Panc1 (cell line): ENCODE measurements at regions of chr16 and their contacts with region 1.

Region 1: DNA sequence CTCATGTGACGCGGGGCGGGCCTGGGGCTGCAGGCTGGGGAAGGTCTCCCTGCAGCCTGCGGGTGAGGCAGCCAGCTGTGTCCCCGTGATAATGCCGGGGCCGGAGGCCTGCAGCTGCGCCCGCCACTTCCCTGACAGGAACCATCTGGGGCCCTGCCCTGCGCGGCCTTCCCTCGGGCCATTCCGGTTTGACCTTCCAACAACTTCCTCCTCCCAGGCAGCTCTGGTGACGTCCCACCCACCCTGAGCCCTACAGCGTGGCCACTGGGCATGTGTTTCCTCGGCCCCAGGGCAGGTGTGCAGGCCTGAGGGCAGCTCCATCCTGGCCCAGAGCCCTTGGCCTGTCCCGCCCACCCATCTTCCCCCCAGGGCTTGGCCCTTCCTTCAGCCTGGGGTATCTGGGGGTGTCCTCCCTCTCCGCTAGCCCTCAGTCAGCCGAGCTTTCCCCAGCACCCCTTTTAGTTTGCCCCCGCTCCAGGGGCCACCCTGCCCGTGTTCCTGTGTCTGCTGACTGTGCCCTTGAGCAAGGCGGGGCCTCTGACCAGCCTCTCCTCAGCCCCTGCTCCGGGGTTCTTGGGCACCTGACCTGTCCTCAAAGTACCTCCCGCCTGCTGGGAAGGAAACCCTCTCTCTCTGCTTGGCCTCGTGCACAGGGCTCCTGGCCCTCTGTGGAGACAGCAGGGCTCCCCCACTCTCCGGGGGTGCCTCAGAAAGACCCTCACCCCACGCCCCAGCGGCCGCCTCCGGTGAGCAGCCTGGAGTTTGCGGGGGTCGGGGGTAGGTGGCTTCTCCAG is at the start of gene CBFA2T3:
- DNase-seq: no peak
- ATAC-seq: no peak
- H3K4me3 ChIP-seq: no peak within 1 kb of the TSS
- H3K27ac ChIP-seq: no peak within 1 kb of the TSS
- H3K4me1 ChIP-seq: no peaks in the 10 kb centered on the region
- H3K27me3 ChIP-seq: no peaks in the 10 kb centered on the region
- CTCF ChIP-seq: no peak
- total RNA-seq, gene CBFA2T3: 13.7 TPM

Region 2: GRCh38 chr16:88831838-88832237 is 145.4 kb before region 1 on chr16:
- CTCF ChIA-PET with region 1: no interaction called
- POLR2A ChIA-PET with region 1: no interaction called
- in situ Hi-C with region 1: no loop called
- intact Hi-C with region 1: no loop called
- DNase-seq: no peak
- ATAC-seq: peak; percentile 61; the same call in 1 of the 2 replicates
- H3K4me3 ChIP-seq: no peak overlapping the region
- H3K27ac ChIP-seq: no peak overlapping the region
- H3K4me1 ChIP-seq: no peaks in the 10 kb centered on the region
- H3K27me3 ChIP-seq: no peaks in the 10 kb centered on the region
- CTCF ChIP-seq: no peak

Region 3: DNA sequence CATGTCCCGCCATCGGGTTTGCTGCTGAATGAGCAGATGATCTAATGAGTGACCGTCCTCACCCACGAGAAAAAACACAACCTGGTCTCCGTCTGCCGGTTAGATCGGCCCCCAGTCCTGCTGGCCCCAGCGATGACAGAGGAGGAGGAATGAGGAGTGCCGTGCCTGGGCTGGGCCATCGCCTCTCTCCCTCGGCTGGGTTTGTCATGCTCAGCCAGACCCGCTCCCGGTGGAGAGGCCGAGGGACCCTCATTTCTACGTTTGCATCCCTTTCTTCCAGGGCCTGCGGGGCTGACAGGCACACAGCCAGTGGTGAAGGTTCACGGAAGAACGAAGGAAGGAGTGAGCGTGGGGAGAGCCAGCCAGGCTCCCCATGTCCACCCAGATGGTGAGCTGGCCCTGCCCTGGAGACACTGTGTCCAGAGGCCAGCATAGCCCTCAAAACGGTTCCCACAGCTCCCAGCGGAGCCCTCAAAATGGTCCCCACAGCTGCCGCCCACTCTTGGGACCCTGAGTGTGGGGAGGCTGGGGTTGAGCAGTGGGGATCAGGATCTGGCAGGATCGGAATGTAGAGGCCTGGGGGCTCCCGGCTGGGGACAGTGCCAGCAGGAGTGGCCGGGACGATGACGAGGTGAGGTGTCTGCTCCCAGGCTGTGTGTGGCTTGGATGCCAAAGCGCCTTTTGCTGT is 24.1 kb before region 1 on chr16:
- CTCF ChIA-PET with region 1: no interaction called
- POLR2A ChIA-PET with region 1: interaction called, 11 read pairs
- in situ Hi-C with region 1: no loop called
- intact Hi-C with region 1: no loop called
- DNase-seq: no peak
- ATAC-seq: peak; percentile 62; the same call in 1 of the 2 replicates
- H3K4me3 ChIP-seq: no peak overlapping the region
- H3K27ac ChIP-seq: no peak overlapping the region
- H3K4me1 ChIP-seq: no peaks in the 10 kb centered on the region
- H3K27me3 ChIP-seq: no peaks in the 10 kb centered on the region
- CTCF ChIP-seq: no peak